ENCODE measurements at regions of chr3 and their contacts with region 1.

Region 1: GRCh38 chr3:15787526-15787925 is 10.3 kb downstream of the ANKRD28 start:
- DNase-seq: no peak
- ATAC-seq: no peak
- H3K4me3 ChIP-seq: no peak overlapping the region
- H3K4me3 Mint-ChIP-seq: no peak overlapping the region
- H3K27ac ChIP-seq: no peak overlapping the region
- H3K27ac Mint-ChIP-seq: no peak overlapping the region
- H3K4me1 ChIP-seq: no peaks in the 10 kb centered on the region
- H3K4me1 Mint-ChIP-seq: peaks cover 34% of the 10 kb centered on the region
- H3K27me3 ChIP-seq: no peaks in the 10 kb centered on the region
- H3K27me3 Mint-ChIP-seq: no peaks in the 10 kb centered on the region
- CTCF ChIP-seq: no peak

Region 2: DNA sequence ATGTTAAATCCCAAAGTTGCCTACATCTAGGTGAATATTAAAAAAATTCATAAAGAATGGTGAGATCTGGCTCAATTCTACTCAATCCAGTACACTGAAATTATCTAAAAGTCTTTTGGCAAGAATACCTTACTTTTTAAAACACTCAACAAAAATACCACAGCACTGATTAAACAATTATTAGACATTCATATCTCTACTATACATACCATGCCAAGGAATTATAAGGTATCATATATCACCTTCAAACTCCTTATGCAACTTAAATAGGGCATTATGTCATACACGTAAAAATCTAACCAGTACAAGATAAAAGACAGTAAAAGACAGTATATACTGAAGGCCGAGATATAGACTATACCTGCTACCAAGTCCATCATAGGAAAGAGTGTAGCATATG is 16.4 kb after region 1 on chr3:
- CTCF ChIA-PET with region 1: interaction called, 3 read pairs
- POLR2A ChIA-PET with region 1: interaction called, 5 read pairs
- intact Hi-C with region 1: loop called in 1 of 2 experiments (anchors 2 kb)
- DNase-seq: no peak
- ATAC-seq: no peak
- H3K4me3 ChIP-seq: no peak overlapping the region
- H3K4me3 Mint-ChIP-seq: no peak overlapping the region
- H3K27ac ChIP-seq: no peak overlapping the region
- H3K27ac Mint-ChIP-seq: no peak overlapping the region
- H3K4me1 ChIP-seq: peaks cover 26% of the 10 kb centered on the region
- H3K4me1 Mint-ChIP-seq: peaks cover 71% of the 10 kb centered on the region
- H3K27me3 ChIP-seq: no peaks in the 10 kb centered on the region
- H3K27me3 Mint-ChIP-seq: no peaks in the 10 kb centered on the region
- CTCF ChIP-seq: no peak

Region 3: GRCh38 chr3:15974647-15975046 is 187.1 kb after region 1 on chr3:
- CTCF ChIA-PET with region 1: no interaction called
- POLR2A ChIA-PET with region 1: no interaction called
- intact Hi-C with region 1: no loop called
- DNase-seq: peak in 1 of 9 experiments; percentile 3
- ATAC-seq: no peak
- H3K4me3 ChIP-seq: no peak overlapping the region
- H3K4me3 Mint-ChIP-seq: no peak overlapping the region
- H3K27ac ChIP-seq: no peak overlapping the region
- H3K27ac Mint-ChIP-seq: no peak overlapping the region
- H3K4me1 ChIP-seq: no peaks in the 10 kb centered on the region
- H3K4me1 Mint-ChIP-seq: no peaks in the 10 kb centered on the region
- H3K27me3 ChIP-seq: no peaks in the 10 kb centered on the region
- H3K27me3 Mint-ChIP-seq: peaks cover 3% of the 10 kb centered on the region
- CTCF ChIP-seq: no peak